Naive thymus-derived CD4-positive, alpha-beta T cell (primary cell): ENCODE measurements at regions of chr19 and their contacts with region 1.

Region 1: GRCh38 chr19:35168207-35168606 is 13.7 kb downstream of the FXYD5 start:
- DNase-seq: no peak
- ATAC-seq: no peak
- H3K4me3 ChIP-seq: no peak overlapping the region
- H3K4me3 Mint-ChIP-seq: peak overlapping the region in 2 of 10 donors; percentile 19 to 43
- H3K27ac ChIP-seq: peak overlapping the region; percentile 46
- H3K27ac Mint-ChIP-seq: peak overlapping the region; percentile 26 to 96 (median 91)
- H3K4me1 ChIP-seq: peaks cover 34 to 36% of the 10 kb centered on the region in 2 donors
- H3K4me1 Mint-ChIP-seq: peaks cover 23 to 55% (median 44%) of the 10 kb centered on the region in 7 donors
- H3K27me3 ChIP-seq: no peaks in the 10 kb centered on the region
- H3K27me3 Mint-ChIP-seq: no peaks in the 10 kb centered on the region

Region 2: DNA sequence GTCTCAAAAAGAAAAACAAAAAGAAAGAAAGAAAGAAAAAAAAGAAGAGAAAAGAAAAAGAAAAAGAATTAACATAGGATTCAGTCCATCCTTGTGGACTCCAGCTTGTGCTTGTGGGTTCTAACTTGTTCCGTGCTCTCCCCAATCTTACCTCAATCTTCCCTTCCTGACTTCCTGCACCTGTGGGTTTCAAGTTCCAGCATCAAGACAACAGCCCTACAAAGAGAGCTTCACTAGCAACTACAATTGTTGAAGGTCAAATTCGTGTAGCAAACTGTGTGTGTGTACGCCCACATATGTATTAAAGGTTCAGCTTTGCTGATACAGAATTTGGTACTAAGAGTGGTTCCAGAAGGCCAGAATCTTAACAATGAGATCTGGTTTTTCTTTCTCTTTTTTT is 11.6 kb after region 1 on chr19:
- CTCF ChIA-PET with region 1: interaction called, 3 read pairs
- POLR2A ChIA-PET with region 1: interaction called, 11 read pairs
- intact Hi-C with region 1: no loop called
- DNase-seq: peak in 3 of 9 donors; percentile 25 to 29 (median 29)
- ATAC-seq: no peak
- H3K4me3 ChIP-seq: no peak overlapping the region
- H3K4me3 Mint-ChIP-seq: peak overlapping the region in 9 of 10 donors; percentile 22 to 75 (median 58)
- H3K27ac ChIP-seq: no peak overlapping the region
- H3K27ac Mint-ChIP-seq: peak overlapping the region; percentile 17 to 88 (median 53)
- H3K4me1 ChIP-seq: peaks cover 0 to 14% of the 10 kb centered on the region in 2 donors
- H3K4me1 Mint-ChIP-seq: peaks cover 26 to 59% (median 41%) of the 10 kb centered on the region in 7 donors
- H3K27me3 ChIP-seq: no peaks in the 10 kb centered on the region
- H3K27me3 Mint-ChIP-seq: peaks cover 0 to 5% (median 0%) of the 10 kb centered on the region in 5 donors